Heart right ventricle (tissue), 16 donors: ENCODE measurements at regions of chr3 and their contacts with region 1.

Region 1: GRCh38 chr3:138417559-138417982 is 16.8 kb upstream of the ESYT3 start:
- DNase-seq: peak; percentile 69 to 83
- ATAC-seq: peak; percentile 80 to 91 (median 88)
- H3K4me3 ChIP-seq: no peak overlapping the region
- H3K27ac ChIP-seq: no peak overlapping the region
- H3K4me1 ChIP-seq: peaks cover 0 to 21% (median 6%) of the 10 kb centered on the region in 9 donors
- H3K27me3 ChIP-seq: no peaks in the 10 kb centered on the region
- CTCF ChIP-seq: peak; percentile 79 to 96 (median 92)

Region 2: GRCh38 chr3:137524751-137525150 is 892.8 kb before region 1 on chr3:
- intact Hi-C with region 1: no loop called
- DNase-seq: no peak
- ATAC-seq: no peak
- H3K4me3 ChIP-seq: no peak overlapping the region
- H3K27ac ChIP-seq: no peak overlapping the region
- H3K4me1 ChIP-seq: no peaks in the 10 kb centered on the region
- H3K27me3 ChIP-seq: no peaks in the 10 kb centered on the region
- CTCF ChIP-seq: no peak

Region 3: GRCh38 chr3:138332472-138333076 is 85.0 kb before region 1 on chr3:
- intact Hi-C with region 1: loop called in 6 of 10 experiments (anchors 5 kb)
- DNase-seq: no peak
- ATAC-seq: no peak
- H3K4me3 ChIP-seq: no peak overlapping the region
- H3K27ac ChIP-seq: no peak overlapping the region
- H3K4me1 ChIP-seq: peaks cover 0 to 25% (median 8%) of the 10 kb centered on the region in 9 donors
- H3K27me3 ChIP-seq: peaks cover 0 to 6% (median 0%) of the 10 kb centered on the region in 7 donors
- CTCF ChIP-seq: peak; percentile 46 to 76 (median 71)

Region 4: GRCh38 chr3:138347960-138348753 is 69.4 kb before region 1 on chr3 and contains the start of gene MRAS:
- intact Hi-C with region 1: loop called in 3 of 10 experiments (anchors 5 to 10 kb)
- DNase-seq: peak; percentile 75 to 83
- ATAC-seq: peak; percentile 50 to 87 (median 74)
- H3K4me3 ChIP-seq: peak within 1 kb of the TSS; percentile 38 to 94 (median 86)
- H3K27ac ChIP-seq: peak within 1 kb of the TSS; percentile 89 to 99 (median 94)
- H3K4me1 ChIP-seq: peaks cover 0 to 47% (median 33%) of the 10 kb centered on the region in 9 donors
- H3K27me3 ChIP-seq: peaks cover 0 to 14% (median 0%) of the 10 kb centered on the region in 7 donors
- CTCF ChIP-seq: peak in 7 of 9 donors; percentile 34 to 70 (median 42)
- total RNA-seq, gene MRAS: 221 to 381 (median 266) TPM

Region 5: GRCh38 chr3:138442433-138442832 is 24.9 kb after region 1 on chr3:
- intact Hi-C with region 1: no loop called
- DNase-seq: no peak
- ATAC-seq: no peak
- H3K4me3 ChIP-seq: no peak overlapping the region
- H3K27ac ChIP-seq: no peak overlapping the region
- H3K4me1 ChIP-seq: peaks cover 0 to 16% (median 0%) of the 10 kb centered on the region in 9 donors
- H3K27me3 ChIP-seq: peaks cover 0 to 4% (median 0%) of the 10 kb centered on the region in 7 donors
- CTCF ChIP-seq: no peak

Region 6: GRCh38 chr3:138923531-138923994 is 506.0 kb after region 1 on chr3:
- intact Hi-C with region 1: loop called in 4 of 10 experiments (anchors 2 to 5 kb)
- DNase-seq: peak; percentile 71 to 81
- ATAC-seq: peak; percentile 61 to 82 (median 78)
- H3K4me3 ChIP-seq: no peak overlapping the region
- H3K27ac ChIP-seq: no peak overlapping the region
- H3K4me1 ChIP-seq: peaks cover 0 to 6% (median 0%) of the 10 kb centered on the region in 9 donors
- H3K27me3 ChIP-seq: peaks cover 0 to 6% (median 0%) of the 10 kb centered on the region in 7 donors
- CTCF ChIP-seq: peak; percentile 82 to 95 (median 90)

Region 7: GRCh38 chr3:138935848-138936740 is 518.5 kb after region 1 on chr3:
- intact Hi-C with region 1: loop called in 1 of 10 experiments (anchors 10 kb)
- DNase-seq: peak; percentile 71 to 83
- ATAC-seq: peak; percentile 69 to 85 (median 78)
- H3K4me3 ChIP-seq: peak overlapping the region in 9 of 10 donors; percentile 12 to 44 (median 41)
- H3K27ac ChIP-seq: no peak overlapping the region
- H3K4me1 ChIP-seq: peaks cover 17 to 47% (median 44%) of the 10 kb centered on the region in 9 donors
- H3K27me3 ChIP-seq: peaks cover 38 to 71% (median 60%) of the 10 kb centered on the region in 7 donors
- CTCF ChIP-seq: peak; percentile 86 to 98 (median 95)

Region 8: DNA sequence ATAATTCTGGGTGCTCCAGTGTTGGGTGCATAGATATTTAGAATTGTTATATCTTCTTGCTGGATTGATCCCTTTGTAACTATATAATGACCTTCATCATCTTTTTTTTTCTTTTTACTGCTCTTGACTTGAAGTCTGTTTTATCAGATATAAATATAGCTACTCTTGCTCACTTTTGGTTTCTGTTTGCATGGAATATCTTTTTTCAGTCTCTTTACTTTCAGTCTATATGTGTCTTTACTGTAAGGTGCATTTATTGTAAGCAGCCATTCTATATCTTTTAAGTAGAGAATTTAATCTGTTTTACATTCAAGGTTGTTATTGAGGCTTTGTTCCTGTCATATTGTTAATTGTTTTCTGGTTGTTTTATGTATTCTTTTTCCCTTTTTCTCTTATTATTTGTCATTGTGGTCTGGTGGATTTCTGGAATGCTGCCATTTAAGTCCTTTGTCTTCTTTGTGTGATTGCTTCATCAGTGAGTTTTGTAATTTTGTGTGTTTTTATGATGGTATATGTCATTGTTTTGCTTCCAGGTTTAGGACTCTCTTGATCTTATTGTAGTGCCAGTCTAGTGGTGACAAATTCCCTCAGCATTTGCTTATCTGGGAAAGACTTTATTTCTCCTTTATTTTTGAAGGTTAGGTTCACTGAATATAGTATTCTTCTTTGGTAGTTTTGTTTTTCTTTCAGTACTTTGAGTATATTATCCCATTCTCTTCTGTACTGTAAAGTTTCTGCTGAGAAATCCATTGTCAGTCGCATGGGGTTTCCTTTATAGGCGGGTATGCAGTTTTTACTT is 635.4 kb after region 1 on chr3:
- intact Hi-C with region 1: no loop called
- DNase-seq: no peak
- ATAC-seq: no peak
- H3K4me3 ChIP-seq: no peak overlapping the region
- H3K27ac ChIP-seq: no peak overlapping the region
- H3K4me1 ChIP-seq: no peaks in the 10 kb centered on the region
- H3K27me3 ChIP-seq: no peaks in the 10 kb centered on the region
- CTCF ChIP-seq: no peak

Region 9: DNA sequence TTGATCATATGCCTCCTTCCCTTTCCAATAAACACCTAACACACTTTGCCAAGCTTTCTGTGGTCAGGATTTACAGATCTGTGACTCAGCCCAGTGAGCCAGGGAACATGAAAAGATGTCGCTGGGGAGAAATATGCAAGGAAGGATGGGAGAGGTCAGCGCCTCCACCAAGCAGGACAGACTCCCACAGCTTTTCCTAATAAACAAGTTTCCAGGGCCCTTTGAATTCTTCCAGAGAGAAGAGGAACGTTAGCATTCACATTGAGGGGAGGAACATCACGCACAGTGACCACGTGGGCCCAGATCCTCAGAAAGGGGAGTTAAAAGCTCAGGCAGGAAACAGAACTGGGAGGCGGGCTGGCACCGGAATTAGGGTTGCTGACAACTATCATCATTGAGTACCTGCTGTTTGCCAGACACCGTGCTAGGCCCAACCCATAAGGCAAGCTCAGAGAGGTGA is 892.9 kb after region 1 on chr3:
- intact Hi-C with region 1: no loop called
- DNase-seq: no peak
- ATAC-seq: no peak
- H3K4me3 ChIP-seq: no peak overlapping the region
- H3K27ac ChIP-seq: no peak overlapping the region
- H3K4me1 ChIP-seq: no peaks in the 10 kb centered on the region
- H3K27me3 ChIP-seq: peaks cover 0 to 19% (median 12%) of the 10 kb centered on the region in 7 donors
- CTCF ChIP-seq: no peak